Calu3 (cell line): ENCODE measurements at regions of chr3 and their contacts with region 1.

Region 1: GRCh38 chr3:10344147-10344943 is 23.4 kb upstream of the SEC13 start:
- DNase-seq: peak; percentile 58
- H3K4me3 Mint-ChIP-seq: no peak overlapping the region
- H3K27ac Mint-ChIP-seq: no peak overlapping the region
- H3K4me1 Mint-ChIP-seq: no peaks in the 10 kb centered on the region
- H3K27me3 Mint-ChIP-seq: peaks cover 94% of the 10 kb centered on the region
- CTCF ChIP-seq: peak; percentile 86

Region 2: GRCh38 chr3:10319804-10320677 is 24.3 kb before region 1 on chr3:
- CTCF ChIA-PET with region 1: interaction called, 11 read pairs
- intact Hi-C with region 1: no loop called
- DNase-seq: no peak
- H3K4me3 Mint-ChIP-seq: peak overlapping the region; percentile 82
- H3K27ac Mint-ChIP-seq: peak overlapping the region; percentile 72
- H3K4me1 Mint-ChIP-seq: no peaks in the 10 kb centered on the region
- H3K27me3 Mint-ChIP-seq: peaks cover 20% of the 10 kb centered on the region
- CTCF ChIP-seq: no peak

Region 3: DNA sequence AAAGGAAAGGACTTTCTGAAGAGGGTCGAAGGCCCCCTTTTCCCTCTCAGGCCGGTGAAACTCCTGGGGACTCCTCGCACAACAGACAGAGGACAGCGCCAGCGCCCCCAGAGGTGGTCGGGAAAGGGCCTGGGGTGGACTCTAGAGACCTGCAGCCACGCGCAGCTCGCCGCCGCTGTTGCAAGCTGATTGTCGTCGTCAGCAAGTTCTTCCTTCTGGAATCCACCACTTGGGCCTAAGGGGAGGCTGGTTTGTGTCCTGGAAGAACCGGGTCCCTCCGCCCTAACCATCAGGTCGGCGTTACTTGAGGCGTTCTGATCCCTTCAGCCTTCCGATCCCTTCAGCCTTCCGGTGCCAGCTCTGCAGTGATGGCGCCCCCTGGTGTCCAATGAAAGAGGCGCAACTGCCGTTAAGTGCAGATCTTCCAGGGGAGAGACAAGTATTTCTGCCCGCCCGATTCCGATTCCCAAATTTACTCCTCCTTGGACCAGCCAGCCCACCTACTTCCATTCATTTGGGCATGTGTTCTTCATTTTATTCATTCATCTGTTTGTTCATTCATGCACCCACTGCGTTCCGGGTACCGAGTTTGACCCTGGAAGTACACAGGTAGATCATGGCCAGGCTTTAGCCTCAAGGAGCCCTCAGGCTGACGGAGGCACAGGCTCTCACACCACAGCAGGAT is 394.5 kb after region 1 on chr3:
- CTCF ChIA-PET with region 1: no interaction called
- intact Hi-C with region 1: loop called (anchors 2 kb)
- DNase-seq: peak; percentile 70
- H3K4me3 Mint-ChIP-seq: no peak overlapping the region
- H3K27ac Mint-ChIP-seq: no peak overlapping the region
- H3K4me1 Mint-ChIP-seq: no peaks in the 10 kb centered on the region
- H3K27me3 Mint-ChIP-seq: peaks cover 83% of the 10 kb centered on the region
- CTCF ChIP-seq: peak; percentile 78